CD4-positive, alpha-beta T cell (primary cell): ENCODE measurements at regions of chr7 and their contacts with region 1.

Region 1: GRCh38 chr7:65307651-65308299 is 65.9 kb upstream of the ZNF92 start:
- DNase-seq: peak in 13 of 14 experiments; percentile 7 to 69 (median 22)
- ATAC-seq: peak; percentile 43
- H3K4me3 ChIP-seq: no peak overlapping the region
- H3K4me3 Mint-ChIP-seq: no peak overlapping the region
- H3K27ac ChIP-seq: no peak overlapping the region
- H3K27ac Mint-ChIP-seq: no peak overlapping the region
- H3K4me1 ChIP-seq: peaks cover 3% of the 10 kb centered on the region
- H3K4me1 Mint-ChIP-seq: no peaks in the 10 kb centered on the region
- H3K27me3 ChIP-seq: peaks cover 0 to 6% of the 10 kb centered on the region in 2 experiments
- H3K27me3 Mint-ChIP-seq: peaks cover 20% of the 10 kb centered on the region
- CTCF ChIP-seq: peak; percentile 86

Region 2: DNA sequence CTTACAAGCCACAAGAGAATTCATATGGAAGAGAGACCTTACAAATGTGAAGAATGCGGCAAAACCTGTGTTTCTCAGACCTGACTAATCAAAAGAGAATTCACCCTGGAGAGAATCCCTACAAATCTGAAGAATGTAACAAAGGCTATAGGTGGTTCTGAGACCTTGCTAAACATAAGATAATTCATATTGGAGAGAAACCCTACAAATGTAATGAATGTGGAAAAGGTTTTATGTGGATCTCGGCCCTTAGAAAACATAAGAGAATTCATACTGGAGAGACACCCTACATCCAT is 1229.1 kb before region 1 on chr7:
- CTCF ChIA-PET with region 1: no interaction called
- POLR2A ChIA-PET with region 1: no interaction called
- intact Hi-C with region 1: no loop called
- DNase-seq: no peak
- ATAC-seq: no peak
- H3K4me3 ChIP-seq: no peak overlapping the region
- H3K4me3 Mint-ChIP-seq: no peak overlapping the region
- H3K27ac ChIP-seq: no peak overlapping the region
- H3K27ac Mint-ChIP-seq: no peak overlapping the region
- H3K4me1 ChIP-seq: no peaks in the 10 kb centered on the region
- H3K4me1 Mint-ChIP-seq: no peaks in the 10 kb centered on the region
- H3K27me3 ChIP-seq: no peaks in the 10 kb centered on the region
- H3K27me3 Mint-ChIP-seq: no peaks in the 10 kb centered on the region
- CTCF ChIP-seq: no peak

Region 3: DNA sequence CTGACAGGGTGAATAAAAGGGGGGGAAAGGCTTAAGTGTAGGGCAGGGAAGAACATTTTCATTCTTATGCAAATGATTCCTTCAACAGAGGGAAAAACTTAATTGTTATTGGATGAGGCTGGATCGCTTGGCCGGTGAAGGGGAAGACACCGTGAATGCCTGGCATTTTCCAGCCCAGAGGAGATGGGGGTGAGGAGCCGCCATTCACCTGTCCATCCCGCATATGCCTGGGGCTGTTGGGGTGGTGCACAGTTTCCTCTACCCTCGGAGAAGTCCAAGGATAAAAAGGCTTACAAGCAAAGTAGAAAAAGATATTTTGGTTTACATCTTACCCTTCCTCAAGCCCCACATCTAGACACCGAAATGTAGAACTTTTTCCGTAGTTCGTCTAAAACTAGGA is 940.9 kb before region 1 on chr7:
- CTCF ChIA-PET with region 1: no interaction called
- POLR2A ChIA-PET with region 1: no interaction called
- intact Hi-C with region 1: no loop called
- DNase-seq: no peak
- ATAC-seq: no peak
- H3K4me3 ChIP-seq: no peak overlapping the region
- H3K4me3 Mint-ChIP-seq: no peak overlapping the region
- H3K27ac ChIP-seq: no peak overlapping the region
- H3K27ac Mint-ChIP-seq: no peak overlapping the region
- H3K4me1 ChIP-seq: no peaks in the 10 kb centered on the region
- H3K4me1 Mint-ChIP-seq: no peaks in the 10 kb centered on the region
- H3K27me3 ChIP-seq: no peaks in the 10 kb centered on the region
- H3K27me3 Mint-ChIP-seq: no peaks in the 10 kb centered on the region
- CTCF ChIP-seq: no peak

Region 4: DNA sequence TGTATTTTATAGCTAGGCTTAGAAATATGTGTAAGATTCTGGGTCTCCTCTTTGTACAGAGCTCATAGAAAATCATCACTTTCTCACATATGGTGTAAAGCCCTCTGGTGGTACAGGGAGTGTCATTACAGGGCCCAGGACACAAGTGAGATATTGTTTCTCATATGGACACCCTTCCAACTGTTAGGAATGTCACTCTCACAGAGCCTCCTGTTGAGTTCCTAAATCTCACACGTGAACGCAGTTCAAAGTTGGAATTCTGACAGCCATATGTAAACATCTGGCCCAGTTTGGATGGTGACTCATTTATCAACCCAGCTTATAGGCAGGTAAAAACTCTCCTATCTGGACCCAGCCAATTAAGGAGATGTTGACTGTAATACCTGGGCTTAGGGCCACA is 677.3 kb before region 1 on chr7:
- CTCF ChIA-PET with region 1: no interaction called
- POLR2A ChIA-PET with region 1: no interaction called
- intact Hi-C with region 1: loop called in 1 of 2 experiments (anchors 10 kb)
- DNase-seq: peak in 3 of 14 experiments; percentile 6 to 30 (median 25)
- ATAC-seq: peak; percentile 46
- H3K4me3 ChIP-seq: no peak overlapping the region
- H3K4me3 Mint-ChIP-seq: no peak overlapping the region
- H3K27ac ChIP-seq: no peak overlapping the region
- H3K27ac Mint-ChIP-seq: no peak overlapping the region
- H3K4me1 ChIP-seq: no peaks in the 10 kb centered on the region
- H3K4me1 Mint-ChIP-seq: no peaks in the 10 kb centered on the region
- H3K27me3 ChIP-seq: no peaks in the 10 kb centered on the region
- H3K27me3 Mint-ChIP-seq: no peaks in the 10 kb centered on the region
- CTCF ChIP-seq: peak; percentile 29

Region 5: DNA sequence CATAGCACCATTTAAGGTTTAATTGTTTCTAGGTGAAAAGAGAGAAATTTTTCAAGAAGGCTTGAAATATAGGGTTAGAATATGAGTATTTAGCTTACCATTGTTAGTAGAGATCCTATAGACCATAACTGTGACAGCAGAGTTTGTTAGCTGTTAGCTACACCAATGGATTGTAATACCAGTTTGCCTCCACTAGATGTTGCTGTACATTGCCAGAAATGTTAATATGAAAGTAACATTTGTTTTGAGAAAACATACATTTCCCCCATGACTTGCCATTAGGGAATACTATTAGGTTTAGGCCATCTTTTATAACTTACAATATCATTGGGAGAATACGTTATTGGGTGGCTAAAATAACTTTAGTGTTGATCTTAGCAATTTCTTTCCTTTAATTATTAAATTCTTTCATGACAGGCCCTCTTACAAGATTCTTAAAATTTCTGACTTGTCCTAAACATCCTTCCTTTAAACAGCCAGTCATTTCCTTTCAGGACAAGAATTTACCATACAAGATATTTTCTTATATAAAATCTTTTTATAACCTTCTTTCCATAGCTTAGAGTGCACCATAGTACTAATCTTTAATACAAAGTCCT is 356.4 kb before region 1 on chr7:
- CTCF ChIA-PET with region 1: no interaction called
- POLR2A ChIA-PET with region 1: interaction called, 3 read pairs
- intact Hi-C with region 1: loop called (anchors 1 kb)
- DNase-seq: peak in 3 of 14 experiments; percentile 56 to 66 (median 65)
- ATAC-seq: peak; percentile 60
- H3K4me3 ChIP-seq: no peak overlapping the region
- H3K4me3 Mint-ChIP-seq: no peak overlapping the region
- H3K27ac ChIP-seq: no peak overlapping the region
- H3K27ac Mint-ChIP-seq: no peak overlapping the region
- H3K4me1 ChIP-seq: peaks cover 13% of the 10 kb centered on the region
- H3K4me1 Mint-ChIP-seq: peaks cover 5% of the 10 kb centered on the region
- H3K27me3 ChIP-seq: peaks cover 20 to 36% of the 10 kb centered on the region in 2 experiments
- H3K27me3 Mint-ChIP-seq: peaks cover 45% of the 10 kb centered on the region
- CTCF ChIP-seq: peak; percentile 96

Region 6: DNA sequence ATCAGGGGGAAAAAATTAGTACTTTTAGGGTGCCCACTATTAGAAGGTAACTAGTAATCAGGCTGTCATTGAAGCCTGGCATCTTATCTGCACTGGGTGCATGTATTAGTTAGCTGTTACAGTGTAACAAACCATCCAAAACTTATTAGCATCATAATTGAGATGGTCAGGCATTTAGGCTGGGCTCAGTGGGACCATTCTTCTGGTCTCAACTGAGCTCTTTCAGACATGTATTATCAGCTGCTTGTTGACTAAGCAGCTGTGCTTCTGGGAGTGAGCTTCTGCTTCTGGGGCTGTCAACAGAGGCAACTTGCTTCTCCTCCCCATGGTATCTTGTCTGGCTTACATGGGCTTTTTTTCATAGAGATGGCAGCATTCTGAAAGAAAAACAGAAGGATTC is 88.2 kb before region 1 on chr7:
- CTCF ChIA-PET with region 1: no interaction called
- POLR2A ChIA-PET with region 1: no interaction called
- intact Hi-C with region 1: loop called in 1 of 2 experiments (anchors 2 kb)
- DNase-seq: no peak
- ATAC-seq: no peak
- H3K4me3 ChIP-seq: no peak overlapping the region
- H3K4me3 Mint-ChIP-seq: no peak overlapping the region
- H3K27ac ChIP-seq: no peak overlapping the region
- H3K27ac Mint-ChIP-seq: no peak overlapping the region
- H3K4me1 ChIP-seq: peaks cover 4% of the 10 kb centered on the region
- H3K4me1 Mint-ChIP-seq: no peaks in the 10 kb centered on the region
- H3K27me3 ChIP-seq: no peaks in the 10 kb centered on the region
- H3K27me3 Mint-ChIP-seq: no peaks in the 10 kb centered on the region
- CTCF ChIP-seq: no peak

Region 7: GRCh38 chr7:65269150-65269856 is 38.5 kb before region 1 on chr7:
- CTCF ChIA-PET with region 1: no interaction called
- POLR2A ChIA-PET with region 1: no interaction called
- intact Hi-C with region 1: no loop called
- DNase-seq: peak in 6 of 14 experiments; percentile 2 to 28 (median 5)
- ATAC-seq: no peak
- H3K4me3 ChIP-seq: peak overlapping the region; percentile 38
- H3K4me3 Mint-ChIP-seq: peak overlapping the region; percentile 70
- H3K27ac ChIP-seq: no peak overlapping the region
- H3K27ac Mint-ChIP-seq: no peak overlapping the region
- H3K4me1 ChIP-seq: peaks cover 10% of the 10 kb centered on the region
- H3K4me1 Mint-ChIP-seq: peaks cover 13% of the 10 kb centered on the region
- H3K27me3 ChIP-seq: peaks cover 19 to 37% of the 10 kb centered on the region in 2 experiments
- H3K27me3 Mint-ChIP-seq: peaks cover 69% of the 10 kb centered on the region
- CTCF ChIP-seq: no peak

Region 8: GRCh38 chr7:66075590-66076461 is 768.1 kb after region 1 on chr7 and contains the start of gene ASL:
- CTCF ChIA-PET with region 1: no interaction called
- POLR2A ChIA-PET with region 1: no interaction called
- intact Hi-C with region 1: no loop called
- DNase-seq: peak; percentile 61 to 93 (median 78)
- ATAC-seq: peak; percentile 97
- H3K4me3 ChIP-seq: peak within 1 kb of the TSS; percentile 96
- H3K4me3 Mint-ChIP-seq: peak within 1 kb of the TSS; percentile 94
- H3K27ac ChIP-seq: peak within 1 kb of the TSS in 1 of 2 donors; percentile 13
- H3K27ac Mint-ChIP-seq: peak within 1 kb of the TSS; percentile 69
- H3K4me1 ChIP-seq: peaks cover 19% of the 10 kb centered on the region
- H3K4me1 Mint-ChIP-seq: peaks cover 22% of the 10 kb centered on the region
- H3K27me3 ChIP-seq: no peaks in the 10 kb centered on the region
- H3K27me3 Mint-ChIP-seq: no peaks in the 10 kb centered on the region
- CTCF ChIP-seq: no peak
- total RNA-seq, gene ASL: 11.2 to 12.3 TPM